CD8-positive, alpha-beta T cell (primary cell): ENCODE measurements at regions of chr6 and their contacts with region 1.

Region 1: DNA sequence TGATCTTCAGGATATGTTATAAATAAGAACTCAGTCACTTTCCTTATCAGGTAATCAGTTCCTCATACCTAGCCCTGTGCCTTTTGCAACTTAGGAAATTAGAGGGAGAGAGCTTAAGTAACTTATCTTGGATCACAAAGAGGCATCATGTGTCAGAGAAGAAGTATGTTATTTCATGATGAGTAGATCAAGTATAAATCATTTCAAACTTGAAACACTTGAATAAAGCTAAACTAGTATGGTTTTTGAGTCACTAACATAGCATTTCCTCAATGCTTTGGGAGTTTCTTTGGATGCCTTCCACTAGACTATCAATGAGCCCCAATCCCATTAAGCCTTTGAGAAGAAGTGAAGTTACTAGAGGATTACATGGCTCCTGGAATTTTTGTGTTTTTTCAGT is 102.6 kb upstream of the TNFAIP3 start:
- DNase-seq: no peak
- ATAC-seq: no peak
- H3K4me3 ChIP-seq: no peak overlapping the region
- H3K4me3 Mint-ChIP-seq: no peak overlapping the region
- H3K27ac ChIP-seq: no peak overlapping the region
- H3K27ac Mint-ChIP-seq: no peak overlapping the region
- H3K4me1 ChIP-seq: peaks cover 14% of the 10 kb centered on the region
- H3K4me1 Mint-ChIP-seq: peaks cover 25% of the 10 kb centered on the region
- H3K27me3 ChIP-seq: no peaks in the 10 kb centered on the region
- H3K27me3 Mint-ChIP-seq: no peaks in the 10 kb centered on the region
- CTCF ChIP-seq: no peak

Region 2: GRCh38 chr6:137717074-137718073 is 47.1 kb before region 1 on chr6:
- CTCF ChIA-PET with region 1: no interaction called
- POLR2A ChIA-PET with region 1: interaction called, 4 read pairs
- intact Hi-C with region 1: loop called in 1 of 2 experiments (anchors 5 kb)
- DNase-seq: peak; percentile 57 to 95 (median 79)
- ATAC-seq: peak; percentile 50
- H3K4me3 ChIP-seq: no peak overlapping the region
- H3K4me3 Mint-ChIP-seq: peak overlapping the region; percentile 46
- H3K27ac ChIP-seq: peak overlapping the region; percentile 5 to 16
- H3K27ac Mint-ChIP-seq: peak overlapping the region; percentile 95
- H3K4me1 ChIP-seq: peaks cover 28% of the 10 kb centered on the region
- H3K4me1 Mint-ChIP-seq: peaks cover 47% of the 10 kb centered on the region
- H3K27me3 ChIP-seq: no peaks in the 10 kb centered on the region
- H3K27me3 Mint-ChIP-seq: no peaks in the 10 kb centered on the region
- CTCF ChIP-seq: no peak